Activated CD4-positive, alpha-beta memory T cell treated with anti-CD3 and anti-CD28 coated beads for 36 hours (primary cell): ENCODE measurements at regions of chr10 and their contacts with region 1.

Region 1: DNA sequence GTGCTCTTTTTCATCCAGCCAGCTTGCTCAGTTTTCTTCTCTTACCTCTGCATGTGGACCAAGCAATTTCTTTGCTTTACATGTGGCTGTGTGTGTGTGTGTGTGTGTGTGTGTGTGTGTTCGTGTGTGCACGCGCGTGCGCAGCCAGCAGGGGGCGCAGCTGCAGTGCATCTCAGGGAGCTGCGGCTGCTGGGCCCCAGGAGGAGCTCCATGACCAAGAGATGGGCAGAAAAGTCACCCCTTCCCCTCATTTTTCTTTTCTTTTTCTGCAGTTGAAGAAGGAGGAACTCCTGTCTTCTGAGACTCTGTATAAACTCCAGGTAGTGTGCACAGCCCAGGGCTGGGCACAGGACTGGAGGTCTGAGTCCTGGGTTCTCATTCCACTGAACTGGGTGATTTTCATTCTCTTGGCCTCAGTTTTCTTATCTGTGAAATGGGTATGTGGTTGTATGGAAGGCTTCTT is 41.8 kb downstream of the BLNK start:
- DNase-seq: peak; percentile 76
- H3K4me3 Mint-ChIP-seq: no peak overlapping the region
- H3K27ac Mint-ChIP-seq: no peak overlapping the region
- H3K4me1 Mint-ChIP-seq: no peaks in the 10 kb centered on the region
- H3K27me3 Mint-ChIP-seq: peaks cover 1% of the 10 kb centered on the region

Region 2: DNA sequence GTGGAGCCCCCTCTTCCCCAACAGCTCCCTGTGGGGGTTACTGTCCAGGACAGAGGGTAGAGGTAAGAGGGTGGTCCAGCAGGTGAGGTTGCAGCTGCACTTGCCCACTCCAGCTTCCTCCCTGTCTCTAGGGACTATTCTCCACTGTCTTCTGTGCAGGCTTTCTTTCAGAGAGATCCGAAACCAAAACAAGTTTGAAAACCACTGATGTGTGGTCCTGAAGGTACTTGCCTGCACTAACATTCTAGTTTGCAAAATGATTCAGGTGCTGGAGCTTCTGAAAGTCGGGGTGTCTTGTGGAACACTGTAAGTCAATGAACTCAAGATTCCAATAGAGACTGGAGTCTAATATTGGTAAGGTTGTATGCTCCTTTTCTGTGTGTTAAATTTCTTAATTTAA is 21.3 kb before region 1 on chr10:
- CTCF ChIA-PET with region 1: interaction called, 12 read pairs
- POLR2A ChIA-PET with region 1: no interaction called
- intact Hi-C with region 1: no loop called
- DNase-seq: no peak
- H3K4me3 Mint-ChIP-seq: no peak overlapping the region
- H3K27ac Mint-ChIP-seq: no peak overlapping the region
- H3K4me1 Mint-ChIP-seq: no peaks in the 10 kb centered on the region
- H3K27me3 Mint-ChIP-seq: no peaks in the 10 kb centered on the region

Region 3: DNA sequence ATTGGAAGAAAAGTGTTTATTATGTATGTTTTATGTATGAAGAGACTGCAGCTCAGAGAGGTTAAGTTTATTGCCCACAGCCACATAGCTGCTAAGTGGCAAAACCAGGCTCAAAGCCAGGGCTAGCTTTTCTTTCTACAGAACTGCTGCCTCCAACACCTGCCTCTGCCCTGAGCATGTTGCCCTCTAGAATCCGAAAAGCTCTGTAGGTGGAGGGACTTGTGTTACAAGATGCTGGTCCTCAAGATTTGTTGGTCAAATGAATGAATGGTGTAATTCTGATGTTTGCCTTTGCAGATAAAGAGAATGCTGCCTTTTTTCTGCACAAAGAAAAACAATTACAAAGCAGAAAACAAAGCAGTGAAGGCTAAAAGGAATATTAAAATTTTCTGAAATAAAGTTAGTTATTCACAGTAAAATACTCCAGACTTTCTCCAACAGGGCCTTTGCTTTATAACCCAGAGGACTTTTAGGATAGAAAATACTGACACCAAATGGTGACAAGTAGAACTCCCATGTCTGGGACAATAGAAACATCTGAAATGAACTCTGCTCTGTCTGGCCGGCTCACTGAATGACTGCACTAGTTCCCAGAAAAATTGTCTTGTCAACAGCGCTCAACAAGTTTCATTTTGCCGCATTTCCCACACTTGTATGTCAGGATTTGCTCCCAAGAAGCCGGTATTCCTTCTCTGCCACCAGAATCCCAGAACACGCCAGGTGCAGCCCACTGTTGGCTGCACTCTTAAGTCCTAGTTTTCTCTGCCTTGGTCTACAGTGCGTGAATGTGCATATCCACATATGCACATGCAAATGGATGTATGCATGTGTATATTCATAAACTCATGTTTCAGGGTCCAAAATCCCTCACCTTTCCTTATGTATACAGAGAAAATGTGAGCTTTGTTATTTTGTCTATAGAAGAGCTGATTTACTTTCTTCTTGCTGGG is 63.6 kb after region 1 on chr10:
- CTCF ChIA-PET with region 1: interaction called, 20 read pairs
- POLR2A ChIA-PET with region 1: no interaction called
- intact Hi-C with region 1: loop called (anchors 5 kb)
- DNase-seq: peak; percentile 13
- H3K4me3 Mint-ChIP-seq: no peak overlapping the region
- H3K27ac Mint-ChIP-seq: no peak overlapping the region
- H3K4me1 Mint-ChIP-seq: peaks cover 2% of the 10 kb centered on the region
- H3K27me3 Mint-ChIP-seq: peaks cover 19% of the 10 kb centered on the region

Region 4: DNA sequence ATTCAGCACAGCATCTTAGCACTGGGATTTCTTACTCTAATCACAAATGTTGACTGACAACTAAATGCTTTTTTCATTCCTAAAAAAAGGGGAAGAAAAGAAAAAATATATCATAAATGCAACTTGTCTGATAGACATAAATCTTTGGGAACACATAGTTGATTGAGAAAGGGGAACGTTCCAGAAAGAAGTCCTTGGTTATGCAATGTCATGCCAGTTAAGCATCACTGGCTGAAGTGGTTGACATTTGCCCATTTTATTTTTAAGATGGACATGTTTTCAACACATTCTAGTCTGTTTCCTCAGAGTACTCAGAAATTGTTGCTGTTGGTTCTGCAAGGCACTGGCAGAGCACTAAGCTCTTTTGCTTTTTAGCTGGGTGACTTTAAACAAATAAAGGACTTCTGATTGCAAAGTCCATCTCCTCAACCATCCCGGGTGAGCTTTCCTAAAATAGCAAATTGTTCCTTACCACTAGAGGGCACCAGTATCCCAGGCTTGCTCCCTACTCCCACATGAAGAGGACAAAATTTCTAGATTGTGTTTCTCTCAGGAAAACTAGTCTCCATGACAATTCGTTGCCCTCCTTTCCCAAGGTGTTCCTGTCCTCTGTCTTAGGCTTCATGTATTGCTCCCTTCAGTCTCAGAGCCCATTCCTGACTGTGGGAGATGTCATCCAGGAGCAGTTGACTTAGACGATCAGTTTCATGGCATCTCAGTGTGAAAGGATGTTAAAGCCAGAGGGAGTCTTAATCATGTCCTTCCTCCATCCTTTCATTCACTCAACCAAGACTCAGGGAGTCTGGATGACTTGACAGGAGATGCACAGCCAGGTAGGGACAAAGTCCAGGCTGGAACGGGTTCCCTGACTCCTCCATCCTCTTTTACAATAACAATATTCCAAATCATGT is 105.3 kb after region 1 on chr10:
- CTCF ChIA-PET with region 1: interaction called, 28 read pairs
- POLR2A ChIA-PET with region 1: no interaction called
- intact Hi-C with region 1: loop called (anchors 2 kb)
- DNase-seq: no peak
- H3K4me3 Mint-ChIP-seq: no peak overlapping the region
- H3K27ac Mint-ChIP-seq: no peak overlapping the region
- H3K4me1 Mint-ChIP-seq: peaks cover 12% of the 10 kb centered on the region
- H3K27me3 Mint-ChIP-seq: peaks cover 27% of the 10 kb centered on the region

Region 5: GRCh38 chr10:96339957-96340904 is 110.6 kb after region 1 on chr10:
- CTCF ChIA-PET with region 1: interaction called, 28 read pairs
- POLR2A ChIA-PET with region 1: no interaction called
- intact Hi-C with region 1: loop called (anchors 2 kb)
- DNase-seq: peak; percentile 71
- H3K4me3 Mint-ChIP-seq: no peak overlapping the region
- H3K27ac Mint-ChIP-seq: no peak overlapping the region
- H3K4me1 Mint-ChIP-seq: peaks cover 7% of the 10 kb centered on the region
- H3K27me3 Mint-ChIP-seq: peaks cover 11% of the 10 kb centered on the region

Region 6: DNA sequence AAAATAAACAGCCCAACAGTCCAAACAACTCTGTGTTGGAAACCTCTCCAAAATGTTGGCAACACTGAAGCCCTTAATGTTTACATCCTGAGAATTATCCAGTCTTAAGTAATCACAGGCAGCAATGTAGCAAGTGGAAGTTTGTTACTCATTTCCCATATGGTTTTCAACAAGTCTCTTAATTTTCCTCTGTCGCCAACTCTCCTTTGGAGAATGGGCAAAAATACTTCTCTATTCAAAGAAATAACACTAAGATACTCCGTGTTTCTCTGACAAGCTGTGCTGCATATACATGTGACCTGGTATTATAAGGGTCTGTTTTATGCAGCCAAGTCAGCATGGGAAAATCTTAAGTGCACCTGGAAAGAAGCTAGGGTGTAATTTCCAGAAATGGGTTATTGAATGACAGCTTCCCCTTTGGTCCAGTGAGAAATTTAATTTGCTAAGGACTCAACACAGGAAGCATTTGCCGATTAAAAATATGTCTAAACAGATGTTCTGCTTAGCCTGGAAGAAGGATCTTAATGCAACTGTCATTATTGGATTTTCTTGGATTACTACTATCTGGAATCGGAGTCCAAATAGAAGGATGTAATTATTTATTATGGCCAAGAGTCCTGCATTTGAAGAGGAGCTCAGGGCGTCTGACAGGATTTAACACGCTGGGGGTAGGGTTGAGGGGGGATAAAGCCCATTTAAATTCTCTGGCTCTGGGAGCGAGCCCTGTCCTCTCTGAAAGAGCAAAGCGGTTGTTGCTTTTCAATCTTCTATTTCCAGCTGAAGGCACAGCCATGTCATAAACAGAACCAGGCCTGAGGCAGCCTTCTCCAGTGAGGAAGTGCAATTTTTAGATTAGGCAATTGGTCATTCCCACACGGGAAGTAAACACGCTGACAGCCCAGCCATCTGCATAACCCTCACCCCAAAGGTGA is 211.0 kb after region 1 on chr10:
- CTCF ChIA-PET with region 1: no interaction called
- POLR2A ChIA-PET with region 1: no interaction called
- intact Hi-C with region 1: no loop called
- DNase-seq: no peak
- H3K4me3 Mint-ChIP-seq: no peak overlapping the region
- H3K27ac Mint-ChIP-seq: no peak overlapping the region
- H3K4me1 Mint-ChIP-seq: no peaks in the 10 kb centered on the region
- H3K27me3 Mint-ChIP-seq: peaks cover 10% of the 10 kb centered on the region